ENCODE measurements at regions of chr6 and their contacts with region 1.

Region 1: GRCh38 chr6:36979347-36979742 is 6.7 kb downstream of the MTCH1 start:
- DNase-seq: peak in 1 of 2 donors; percentile 65
- ATAC-seq: peak; percentile 77
- H3K4me3 ChIP-seq: no peak overlapping the region
- H3K27ac ChIP-seq: no peak overlapping the region
- H3K4me1 ChIP-seq: peaks cover 0 to 3% of the 10 kb centered on the region in 2 donors
- H3K27me3 ChIP-seq: no peaks in the 10 kb centered on the region

Region 2: DNA sequence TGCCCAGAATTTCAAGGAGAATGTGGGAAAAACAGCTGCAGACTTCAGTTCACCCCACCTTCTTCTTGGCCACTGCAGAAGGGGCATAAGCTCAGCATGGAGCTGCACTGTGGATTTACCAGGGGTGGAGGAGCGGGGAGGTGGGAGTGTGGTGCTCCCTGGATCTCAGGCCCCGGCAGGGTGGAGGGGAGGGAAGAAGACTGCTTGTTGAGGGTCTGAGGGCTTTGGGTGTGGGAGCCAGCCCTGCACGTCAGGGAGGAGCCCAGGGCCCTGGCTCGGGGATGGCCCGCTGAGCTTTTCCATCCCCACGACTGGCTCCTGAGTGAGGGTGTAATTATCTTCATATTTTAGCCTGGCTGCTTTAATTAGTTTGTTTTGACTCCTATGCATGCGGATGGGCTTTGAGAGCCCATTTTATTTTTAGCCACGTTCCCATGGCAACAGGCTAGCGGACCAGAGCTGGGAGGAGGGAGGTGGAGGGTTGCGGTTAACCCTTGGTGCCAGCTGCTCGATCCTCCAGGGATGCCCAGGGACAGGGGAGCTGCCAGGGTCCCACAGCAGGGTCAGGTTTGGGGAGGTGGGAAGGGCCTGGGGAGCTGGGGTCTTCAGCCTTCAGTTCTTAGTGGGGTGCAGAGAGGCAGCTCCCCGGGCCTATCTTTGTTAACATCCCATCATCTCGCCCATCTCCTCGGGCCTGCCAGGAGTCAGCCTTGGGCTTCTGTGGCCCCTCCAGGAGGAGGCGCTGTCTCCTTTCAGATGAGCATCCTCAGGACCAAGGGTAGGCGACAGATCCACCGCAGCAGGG is 213.5 kb before region 1 on chr6:
- intact Hi-C with region 1: loop called in 1 of 2 experiments (anchors 5 kb)
- DNase-seq: peak; percentile 91 to 93
- ATAC-seq: peak; percentile 92
- H3K4me3 ChIP-seq: no peak overlapping the region
- H3K27ac ChIP-seq: no peak overlapping the region
- H3K4me1 ChIP-seq: no peaks in the 10 kb centered on the region
- H3K27me3 ChIP-seq: no peaks in the 10 kb centered on the region

Region 3: DNA sequence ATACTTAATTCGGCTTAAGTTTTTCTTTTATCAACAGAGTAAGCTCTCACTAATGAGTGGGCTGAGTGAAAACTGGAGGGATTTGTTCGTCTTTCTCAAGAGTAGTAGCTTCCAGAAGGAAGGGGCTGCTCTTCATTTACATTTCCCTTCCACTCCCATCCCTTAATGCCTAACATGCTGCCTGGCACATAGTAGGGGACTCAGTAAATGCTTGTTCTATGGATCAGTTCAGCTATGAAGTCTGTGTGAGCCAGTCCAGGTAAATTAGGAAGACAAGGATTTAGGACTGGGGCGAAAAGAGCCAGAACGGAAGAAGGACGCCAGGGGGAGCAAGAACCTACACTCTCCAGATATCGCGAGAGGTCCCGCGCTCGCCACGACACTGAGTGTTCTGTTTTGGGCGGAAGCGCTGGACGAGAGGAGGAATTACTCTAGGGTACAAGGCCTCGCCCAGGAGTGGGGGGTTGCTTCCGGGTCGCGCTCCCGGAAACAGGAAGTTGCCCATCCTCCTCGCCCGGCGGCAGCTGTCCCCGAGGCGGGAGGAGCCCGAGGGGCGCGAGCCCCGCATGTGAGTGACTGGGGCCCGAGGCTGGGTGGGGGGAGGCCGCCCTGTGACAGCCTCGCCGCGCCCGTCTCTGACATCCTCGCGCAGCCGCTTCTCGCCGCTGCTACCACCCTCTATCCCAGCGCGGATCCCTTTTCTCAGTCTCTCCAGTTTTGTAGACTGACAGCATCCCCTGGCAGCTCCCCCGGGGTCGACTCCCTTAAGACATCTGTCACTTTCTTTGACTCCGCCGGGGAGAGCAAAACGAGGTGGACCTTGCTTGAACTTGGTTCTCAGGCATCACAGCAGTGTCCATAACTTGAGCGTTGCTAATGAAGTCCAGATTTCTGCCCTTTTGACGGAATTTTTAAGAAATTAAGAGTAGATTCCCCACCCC is 93.6 kb before region 1 on chr6 and contains the start of gene C6orf89:
- intact Hi-C with region 1: loop called in 1 of 2 experiments (anchors 2 kb)
- DNase-seq: peak; percentile 99
- ATAC-seq: peak; percentile 100
- H3K4me3 ChIP-seq: peak within 1 kb of the TSS; percentile 20 to 62
- H3K27ac ChIP-seq: peak within 1 kb of the TSS; percentile 57 to 91
- H3K4me1 ChIP-seq: peaks cover 0 to 2% of the 10 kb centered on the region in 2 donors
- H3K27me3 ChIP-seq: no peaks in the 10 kb centered on the region
- total RNA-seq, gene C6orf89: 56.9 to 59.7 TPM

Region 4: GRCh38 chr6:37182736-37183590 is 203.6 kb after region 1 on chr6:
- intact Hi-C with region 1: no loop called
- DNase-seq: peak in 1 of 2 donors; percentile 73
- ATAC-seq: no peak
- H3K4me3 ChIP-seq: no peak overlapping the region
- H3K27ac ChIP-seq: no peak overlapping the region
- H3K4me1 ChIP-seq: no peaks in the 10 kb centered on the region
- H3K27me3 ChIP-seq: no peaks in the 10 kb centered on the region

Region 5: GRCh38 chr6:37762806-37763205 is 783.5 kb after region 1 on chr6:
- intact Hi-C with region 1: no loop called
- DNase-seq: no peak
- ATAC-seq: no peak
- H3K4me3 ChIP-seq: no peak overlapping the region
- H3K27ac ChIP-seq: no peak overlapping the region
- H3K4me1 ChIP-seq: no peaks in the 10 kb centered on the region
- H3K27me3 ChIP-seq: no peaks in the 10 kb centered on the region

Measured in aorta (tissue), 5 donors.